GM10248 (cell line): ENCODE measurements at regions of chr1 and their contacts with region 1.

Region 1: DNA sequence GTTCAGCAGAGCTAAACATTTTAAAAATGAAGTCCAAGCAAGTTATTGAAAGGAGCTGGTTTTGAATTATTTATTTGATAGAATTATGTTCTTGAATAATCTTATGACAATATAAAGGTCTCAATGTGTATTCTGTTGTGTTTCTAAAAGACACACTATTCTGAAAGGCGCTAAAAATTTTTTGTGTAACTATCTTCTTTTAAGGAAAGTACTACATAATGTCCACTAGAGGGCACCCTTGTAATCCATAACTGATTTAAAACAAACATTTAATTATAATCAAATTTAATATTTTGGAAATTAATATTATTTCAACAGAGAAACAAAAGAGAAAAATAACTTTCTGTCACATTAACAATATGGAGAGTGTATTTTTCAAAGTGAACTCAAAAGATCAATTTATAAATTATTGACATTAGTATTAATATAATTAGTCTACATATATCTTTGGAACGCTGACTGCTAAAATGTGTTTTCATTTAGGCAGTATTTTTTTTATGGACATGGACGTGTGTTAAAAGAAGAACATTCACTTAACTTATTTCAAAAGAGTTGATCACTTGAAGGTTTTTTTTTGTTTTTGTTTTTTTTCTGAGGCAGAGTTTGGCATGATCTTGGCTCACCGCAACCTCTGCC is 248.4 kb downstream of the DENND1B start:
- DNase-seq: peak; percentile 10
- CTCF ChIP-seq: peak; percentile 37

Region 2: DNA sequence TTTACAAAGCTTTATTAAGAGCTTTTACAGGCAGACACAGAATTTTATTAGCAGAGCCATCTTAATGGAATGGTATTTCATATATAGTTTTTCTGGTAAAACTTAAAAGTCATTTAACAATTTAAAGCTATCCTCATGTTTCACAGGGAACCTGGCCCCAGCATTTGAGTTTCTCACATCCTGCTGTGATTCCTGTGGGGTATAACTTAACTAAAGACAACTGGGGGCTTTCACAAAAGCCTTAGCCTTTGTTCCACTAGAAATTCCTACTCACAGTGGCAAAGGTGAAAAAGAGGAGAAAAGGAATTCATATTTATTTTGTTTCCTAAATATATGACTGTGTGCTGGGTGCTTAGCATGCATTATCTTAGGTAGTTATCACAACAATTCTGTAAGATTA is 14.6 kb after region 1 on chr1:
- CTCF ChIA-PET with region 1: interaction called, 14 read pairs
- POLR2A ChIA-PET with region 1: no interaction called
- DNase-seq: no peak
- CTCF ChIP-seq: no peak